Naive thymus-derived CD4-positive, alpha-beta T cell (primary cell): ENCODE measurements at regions of chrX and their contacts with region 1.

Region 1: GRCh38 chrX:3638280-3638873 is 75.1 kb downstream of the PRKX start:
- DNase-seq: peak in 4 of 9 donors; percentile 7 to 24 (median 12)
- ATAC-seq: peak; percentile 54
- H3K4me3 ChIP-seq: no peak overlapping the region
- H3K4me3 Mint-ChIP-seq: no peak overlapping the region
- H3K27ac ChIP-seq: no peak overlapping the region
- H3K27ac Mint-ChIP-seq: peak overlapping the region in 4 of 9 donors; percentile 5 to 51 (median 36)
- H3K4me1 ChIP-seq: no peaks in the 10 kb centered on the region
- H3K4me1 Mint-ChIP-seq: peaks cover 0 to 7% (median 5%) of the 10 kb centered on the region in 7 donors
- H3K27me3 ChIP-seq: no peaks in the 10 kb centered on the region
- H3K27me3 Mint-ChIP-seq: no peaks in the 10 kb centered on the region

Region 2: GRCh38 chrX:2875798-2876399 is 762.5 kb before region 1 on chrX:
- CTCF ChIA-PET with region 1: no interaction called
- POLR2A ChIA-PET with region 1: no interaction called
- intact Hi-C with region 1: loop called in 1 of 2 experiments (anchors 10 kb)
- DNase-seq: no peak
- ATAC-seq: no peak
- H3K4me3 ChIP-seq: no peak overlapping the region
- H3K4me3 Mint-ChIP-seq: no peak overlapping the region
- H3K27ac ChIP-seq: no peak overlapping the region
- H3K27ac Mint-ChIP-seq: no peak overlapping the region
- H3K4me1 ChIP-seq: no peaks in the 10 kb centered on the region
- H3K4me1 Mint-ChIP-seq: no peaks in the 10 kb centered on the region
- H3K27me3 ChIP-seq: no peaks in the 10 kb centered on the region
- H3K27me3 Mint-ChIP-seq: peaks cover 0 to 12% (median 5%) of the 10 kb centered on the region in 5 donors

Region 3: DNA sequence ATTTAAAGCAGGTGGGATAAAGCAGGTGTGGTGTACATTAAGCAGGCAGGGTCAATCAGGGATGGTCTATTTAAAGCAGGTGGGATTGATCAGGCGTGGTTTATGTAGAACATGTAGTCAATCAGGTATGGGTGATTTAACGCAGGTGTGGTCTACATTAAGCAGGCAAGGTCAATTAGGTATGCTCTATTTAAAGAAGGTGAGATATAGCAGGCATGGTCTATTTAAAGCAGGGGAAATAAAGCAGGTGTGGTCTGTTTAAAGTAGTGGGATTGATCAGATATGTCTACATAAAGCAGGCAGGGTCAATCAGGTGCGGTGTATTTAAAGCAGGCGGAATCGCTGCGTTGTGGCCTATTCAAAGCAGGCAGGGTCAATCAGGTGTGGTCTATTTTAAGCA is 203.3 kb before region 1 on chrX:
- CTCF ChIA-PET with region 1: no interaction called
- POLR2A ChIA-PET with region 1: no interaction called
- intact Hi-C with region 1: no loop called
- DNase-seq: no peak
- ATAC-seq: no peak
- H3K4me3 ChIP-seq: no peak overlapping the region
- H3K4me3 Mint-ChIP-seq: no peak overlapping the region
- H3K27ac ChIP-seq: no peak overlapping the region
- H3K27ac Mint-ChIP-seq: no peak overlapping the region
- H3K4me1 ChIP-seq: no peaks in the 10 kb centered on the region
- H3K4me1 Mint-ChIP-seq: no peaks in the 10 kb centered on the region
- H3K27me3 ChIP-seq: no peaks in the 10 kb centered on the region
- H3K27me3 Mint-ChIP-seq: peaks cover 0 to 6% (median 0%) of the 10 kb centered on the region in 5 donors